Activated T-helper 1 cell treated with anti-CD3 and anti-CD28 coated beads, Interleukin-12 subunit alpha, Interleukin-12 subunit beta, Interleukin-2, Interleukin-4 antibody, amounts not matched to agents 30 ng/mL and 10 ng/mL and 1 ng/mL, durations not matched to agents 14 hours and 24 hours and 36 hours (primary cell): ENCODE measurements at regions of chr13 and their contacts with region 1.

Region 1: GRCh38 chr13:39961036-39961435 is 305.6 kb downstream of the COG6 start:
- DNase-seq: no peak
- H3K4me3 Mint-ChIP-seq: no peak overlapping the region
- H3K27ac Mint-ChIP-seq: no peak overlapping the region
- H3K4me1 Mint-ChIP-seq: peaks cover 25% of the 10 kb centered on the region
- H3K27me3 Mint-ChIP-seq: no peaks in the 10 kb centered on the region

Region 2: GRCh38 chr13:39976481-39976880 is 15.4 kb after region 1 on chr13:
- intact Hi-C with region 1: loop called (anchors 1 kb)
- DNase-seq: no peak
- H3K4me3 Mint-ChIP-seq: no peak overlapping the region
- H3K27ac Mint-ChIP-seq: no peak overlapping the region
- H3K4me1 Mint-ChIP-seq: peaks cover 4% of the 10 kb centered on the region
- H3K27me3 Mint-ChIP-seq: peaks cover 21% of the 10 kb centered on the region

Region 3: DNA sequence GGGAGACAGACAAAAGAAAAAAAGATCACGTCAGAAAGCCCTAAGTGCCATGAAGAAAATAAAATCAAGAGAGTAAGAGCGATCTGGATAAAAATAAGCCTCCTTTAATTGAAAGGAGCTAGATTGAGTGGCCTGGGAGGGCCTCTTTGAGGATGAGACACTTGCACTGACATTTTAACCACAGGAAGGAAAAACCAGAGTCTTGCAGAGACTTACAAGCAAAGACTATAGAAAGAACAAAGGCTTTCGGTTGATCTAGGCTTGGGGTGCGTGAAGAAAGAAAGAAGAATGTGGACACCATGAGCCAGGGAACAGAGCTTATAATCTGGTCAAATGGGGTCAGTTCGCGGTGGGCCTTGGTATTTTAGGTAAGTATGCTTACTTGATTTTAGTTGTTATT is 37.1 kb after region 1 on chr13:
- intact Hi-C with region 1: no loop called
- DNase-seq: no peak
- H3K4me3 Mint-ChIP-seq: no peak overlapping the region
- H3K27ac Mint-ChIP-seq: no peak overlapping the region
- H3K4me1 Mint-ChIP-seq: peaks cover 13% of the 10 kb centered on the region
- H3K27me3 Mint-ChIP-seq: peaks cover 13% of the 10 kb centered on the region

Region 4: DNA sequence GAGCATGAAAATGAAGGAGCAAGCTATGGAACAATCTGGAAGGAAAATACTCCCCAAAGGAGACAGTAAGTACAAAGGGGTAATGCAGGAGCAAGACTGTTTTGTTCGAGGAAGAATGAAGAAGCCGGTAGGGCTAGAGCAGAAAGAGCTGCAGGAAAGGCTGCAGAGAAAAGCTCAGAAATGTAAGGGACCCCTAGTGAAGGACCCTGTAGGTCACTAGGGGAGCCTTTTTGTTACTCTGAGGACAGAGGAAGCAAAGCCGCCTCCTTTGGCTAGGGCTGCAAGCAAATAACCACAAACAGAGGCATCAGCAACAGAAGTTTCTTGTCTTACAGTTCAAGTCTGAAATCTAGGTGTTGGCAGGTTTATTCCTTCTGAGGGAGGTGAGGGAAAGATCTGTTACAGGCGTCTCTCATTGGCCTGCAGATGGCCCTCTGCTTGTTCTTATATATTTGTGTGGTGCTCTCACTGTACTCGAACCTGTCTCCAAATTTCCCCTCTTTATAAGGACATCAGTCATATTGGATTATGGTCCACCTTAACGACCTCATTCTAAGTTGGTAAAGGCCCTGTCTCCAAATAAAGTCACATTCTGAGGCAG is 56.7 kb after region 1 on chr13:
- intact Hi-C with region 1: no loop called
- DNase-seq: no peak
- H3K4me3 Mint-ChIP-seq: no peak overlapping the region
- H3K27ac Mint-ChIP-seq: no peak overlapping the region
- H3K4me1 Mint-ChIP-seq: peaks cover 8% of the 10 kb centered on the region
- H3K27me3 Mint-ChIP-seq: peaks cover 16% of the 10 kb centered on the region